T-cell (primary cell): ENCODE measurements at regions of chr1 and their contacts with region 1.

Region 1: GRCh38 chr1:28248283-28249012 is 10.9 kb upstream of the SESN2 start:
- DNase-seq: peak; percentile 62 to 90 (median 79)
- ATAC-seq: peak in 3 of 4 experiments; percentile 31 to 41 (median 39)
- H3K4me3 ChIP-seq: peak overlapping the region; percentile 2 to 7
- H3K4me3 Mint-ChIP-seq: peak overlapping the region; percentile 65 to 93 (median 83)
- H3K27ac ChIP-seq: peak overlapping the region; percentile 95
- H3K27ac Mint-ChIP-seq: peak overlapping the region; percentile 88 to 94
- H3K4me1 ChIP-seq: peaks cover 43 to 47% of the 10 kb centered on the region in 2 experiments
- H3K4me1 Mint-ChIP-seq: peaks cover 44 to 53% (median 51%) of the 10 kb centered on the region in 3 donors
- H3K27me3 ChIP-seq: no peaks in the 10 kb centered on the region
- H3K27me3 Mint-ChIP-seq: no peaks in the 10 kb centered on the region

Region 2: DNA sequence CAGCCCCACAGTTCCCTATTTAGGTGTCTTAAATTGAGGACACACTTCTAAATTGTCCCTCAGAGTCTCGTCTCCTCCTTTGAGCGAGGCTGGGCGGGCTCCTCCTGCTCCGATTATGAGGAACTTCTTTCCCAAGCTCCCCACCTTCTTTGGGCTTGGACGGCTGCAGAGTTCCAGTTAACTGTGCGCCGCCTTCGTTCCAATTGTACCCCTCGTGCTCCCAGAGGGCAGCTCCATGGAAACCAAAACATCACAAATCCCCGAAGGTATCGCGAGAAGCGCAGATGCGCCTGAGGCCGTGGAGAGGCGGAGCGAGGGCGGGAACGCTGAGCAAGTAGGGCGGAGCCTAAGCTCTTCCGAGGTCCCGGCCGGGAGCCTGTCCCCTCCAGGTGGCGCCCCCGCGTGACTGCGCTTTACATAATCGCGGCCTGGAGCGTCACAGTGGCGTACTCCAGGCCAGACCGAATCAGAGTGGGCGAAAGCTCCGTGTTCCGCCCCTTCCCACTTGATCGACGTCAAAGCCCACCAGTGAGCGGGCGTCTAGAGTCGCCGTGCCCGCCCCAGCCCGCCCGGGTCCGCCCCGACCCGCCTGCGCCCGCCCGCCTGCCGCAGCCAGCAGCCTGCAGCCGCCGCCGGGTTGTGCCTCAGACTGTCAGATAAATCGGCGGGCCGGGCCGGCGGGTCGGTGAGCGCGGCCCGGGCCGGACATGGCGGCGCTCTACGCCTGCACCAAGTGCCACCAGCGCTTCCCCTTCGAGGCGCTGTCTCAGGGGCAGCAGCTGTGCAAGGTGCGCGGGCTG is 522.9 kb before region 1 on chr1 and contains the start of gene FAM76A:
- CTCF ChIA-PET with region 1: interaction called in 1 of 2 experiments, 3 read pairs
- POLR2A ChIA-PET with region 1: interaction called in 1 of 2 experiments, 13 read pairs
- DNase-seq: peak; percentile 98 to 100 (median 99)
- ATAC-seq: peak; percentile 91 to 97 (median 94)
- H3K4me3 ChIP-seq: peak within 1 kb of the TSS; percentile 72 to 81
- H3K4me3 Mint-ChIP-seq: peak within 1 kb of the TSS; percentile 84 to 87 (median 87)
- H3K27ac ChIP-seq: peak within 1 kb of the TSS; percentile 85
- H3K27ac Mint-ChIP-seq: peak within 1 kb of the TSS; percentile 95 to 96
- H3K4me1 ChIP-seq: peaks cover 4 to 17% of the 10 kb centered on the region in 2 experiments
- H3K4me1 Mint-ChIP-seq: peaks cover 23 to 28% (median 26%) of the 10 kb centered on the region in 3 donors
- H3K27me3 ChIP-seq: no peaks in the 10 kb centered on the region
- H3K27me3 Mint-ChIP-seq: no peaks in the 10 kb centered on the region
- total RNA-seq, gene FAM76A: 18.1 to 23.4 (median 21.2) TPM

Region 3: GRCh38 chr1:27959400-27960217 is 288.8 kb before region 1 on chr1 and contains the start of gene XKR8:
- CTCF ChIA-PET with region 1: no interaction called
- POLR2A ChIA-PET with region 1: no interaction called
- DNase-seq: peak; percentile 71 to 90 (median 81)
- ATAC-seq: peak; percentile 99
- H3K4me3 ChIP-seq: peak within 1 kb of the TSS; percentile 69 to 77
- H3K4me3 Mint-ChIP-seq: peak within 1 kb of the TSS; percentile 84 to 87 (median 84)
- H3K27ac ChIP-seq: peak within 1 kb of the TSS; percentile 67
- H3K27ac Mint-ChIP-seq: peak within 1 kb of the TSS; percentile 92 to 94
- H3K4me1 ChIP-seq: peaks cover 5 to 32% of the 10 kb centered on the region in 2 experiments
- H3K4me1 Mint-ChIP-seq: peaks cover 29 to 32% (median 32%) of the 10 kb centered on the region in 3 donors
- H3K27me3 ChIP-seq: peaks cover 0 to 11% of the 10 kb centered on the region in 2 experiments
- H3K27me3 Mint-ChIP-seq: no peaks in the 10 kb centered on the region
- total RNA-seq, gene XKR8: 7.7 to 18.3 (median 14.4) TPM

Region 4: GRCh38 chr1:28199328-28200233 is 48.9 kb before region 1 on chr1:
- CTCF ChIA-PET with region 1: no interaction called
- POLR2A ChIA-PET with region 1: no interaction called
- DNase-seq: peak; percentile 22 to 81 (median 64)
- ATAC-seq: peak; percentile 93 to 97 (median 96)
- H3K4me3 ChIP-seq: peak overlapping the region in 1 of 2 donors; percentile 25
- H3K4me3 Mint-ChIP-seq: peak overlapping the region; percentile 42 to 72 (median 42)
- H3K27ac ChIP-seq: peak overlapping the region; percentile 62
- H3K27ac Mint-ChIP-seq: peak overlapping the region; percentile 85 to 93
- H3K4me1 ChIP-seq: peaks cover 10 to 70% of the 10 kb centered on the region in 2 experiments
- H3K4me1 Mint-ChIP-seq: peaks cover 37 to 43% (median 41%) of the 10 kb centered on the region in 3 donors
- H3K27me3 ChIP-seq: peaks cover 0 to 3% of the 10 kb centered on the region in 2 experiments
- H3K27me3 Mint-ChIP-seq: no peaks in the 10 kb centered on the region

Region 5: GRCh38 chr1:28259307-28260167 is 11.1 kb after region 1 on chr1 and contains the start of gene SESN2:
- CTCF ChIA-PET with region 1: interaction called, 3 to 11 read pairs
- POLR2A ChIA-PET with region 1: interaction called in 1 of 2 experiments, 17 read pairs
- DNase-seq: peak; percentile 95 to 99 (median 98)
- ATAC-seq: peak; percentile 95 to 99 (median 97)
- H3K4me3 ChIP-seq: peak within 1 kb of the TSS; percentile 75 to 99
- H3K4me3 Mint-ChIP-seq: peak within 1 kb of the TSS; percentile 77 to 82 (median 79)
- H3K27ac ChIP-seq: peak within 1 kb of the TSS; percentile 34
- H3K27ac Mint-ChIP-seq: peak within 1 kb of the TSS; percentile 67 to 79
- H3K4me1 ChIP-seq: peaks cover 19 to 60% of the 10 kb centered on the region in 2 experiments
- H3K4me1 Mint-ChIP-seq: peaks cover 41 to 52% (median 44%) of the 10 kb centered on the region in 3 donors
- H3K27me3 ChIP-seq: peaks cover 0 to 5% of the 10 kb centered on the region in 2 experiments
- H3K27me3 Mint-ChIP-seq: no peaks in the 10 kb centered on the region
- total RNA-seq, gene SESN2: 7.1 to 11.9 (median 8.6) TPM

Region 6: GRCh38 chr1:28359592-28360239 is 111.3 kb after region 1 on chr1:
- CTCF ChIA-PET with region 1: interaction called, 4 to 11 read pairs
- POLR2A ChIA-PET with region 1: interaction called in 1 of 2 experiments, 4 read pairs
- DNase-seq: peak; percentile 28 to 82 (median 68)
- ATAC-seq: peak; percentile 42 to 79 (median 72)
- H3K4me3 ChIP-seq: no peak overlapping the region
- H3K4me3 Mint-ChIP-seq: no peak overlapping the region
- H3K27ac ChIP-seq: no peak overlapping the region
- H3K27ac Mint-ChIP-seq: no peak overlapping the region
- H3K4me1 ChIP-seq: no peaks in the 10 kb centered on the region
- H3K4me1 Mint-ChIP-seq: no peaks in the 10 kb centered on the region
- H3K27me3 ChIP-seq: no peaks in the 10 kb centered on the region
- H3K27me3 Mint-ChIP-seq: no peaks in the 10 kb centered on the region

Region 7: DNA sequence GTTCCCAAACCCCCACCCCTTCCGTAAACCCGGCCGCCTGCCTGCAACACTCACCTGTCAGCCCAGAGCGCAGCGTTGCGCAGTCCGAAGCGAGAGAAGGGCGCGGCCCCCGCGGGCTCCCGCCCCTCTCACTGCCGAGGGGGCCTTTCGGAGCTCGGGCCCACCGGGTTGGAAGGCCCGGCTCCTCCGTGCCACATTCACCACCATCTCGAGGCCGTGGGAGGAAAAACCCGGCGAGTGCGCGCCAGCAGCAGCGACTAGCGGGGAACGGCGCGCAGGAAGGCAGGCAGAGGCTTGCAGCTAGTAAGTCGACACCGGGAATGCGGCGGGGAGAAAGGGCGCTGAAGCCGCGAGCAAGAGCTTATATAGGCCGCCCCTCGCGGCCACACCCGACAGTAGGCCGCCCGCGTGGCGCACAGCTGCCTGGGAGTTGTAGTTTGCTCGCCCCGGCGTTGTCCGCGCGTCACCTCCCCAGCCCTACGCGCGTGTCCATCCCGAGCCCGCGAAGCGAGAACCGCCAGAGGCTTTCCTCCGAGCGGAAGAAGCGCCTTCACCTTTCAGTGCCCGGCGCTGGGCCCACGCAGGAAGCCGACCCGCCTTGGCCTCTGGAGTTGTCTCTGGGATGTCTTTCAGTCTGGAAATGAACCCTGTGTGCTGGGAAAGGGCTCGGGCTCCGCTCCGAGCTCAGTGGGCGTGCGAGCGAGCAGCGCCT is 333.2 kb after region 1 on chr1:
- CTCF ChIA-PET with region 1: interaction called in 1 of 2 experiments, 4 read pairs
- POLR2A ChIA-PET with region 1: interaction called in 1 of 2 experiments, 13 read pairs
- DNase-seq: peak; percentile 74 to 95 (median 84)
- ATAC-seq: peak; percentile 87 to 92 (median 90)
- H3K4me3 ChIP-seq: peak overlapping the region; percentile 91 to 95
- H3K4me3 Mint-ChIP-seq: peak overlapping the region; percentile 89 to 97 (median 92)
- H3K27ac ChIP-seq: peak overlapping the region; percentile 70
- H3K27ac Mint-ChIP-seq: peak overlapping the region; percentile 92 to 93
- H3K4me1 ChIP-seq: peaks cover 11 to 39% of the 10 kb centered on the region in 2 experiments
- H3K4me1 Mint-ChIP-seq: peaks cover 36 to 52% (median 38%) of the 10 kb centered on the region in 3 donors
- H3K27me3 ChIP-seq: no peaks in the 10 kb centered on the region
- H3K27me3 Mint-ChIP-seq: no peaks in the 10 kb centered on the region